ENCODE measurements at regions of chr17 and their contacts with region 1.

Region 1: GRCh38 chr17:28405632-28406472 is at the start of gene SLC46A1:
- DNase-seq: peak; percentile 96 to 97
- H3K4me3 ChIP-seq: peak within 1 kb of the TSS; percentile 78
- H3K4me3 Mint-ChIP-seq: peak within 1 kb of the TSS; percentile 90
- H3K27ac Mint-ChIP-seq: peak within 1 kb of the TSS; percentile 72
- H3K4me1 ChIP-seq: peaks cover 56% of the 10 kb centered on the region
- H3K4me1 Mint-ChIP-seq: peaks cover 31% of the 10 kb centered on the region
- H3K27me3 ChIP-seq: no peaks in the 10 kb centered on the region
- H3K27me3 Mint-ChIP-seq: no peaks in the 10 kb centered on the region
- CTCF ChIP-seq: no peak
- total RNA-seq, gene SLC46A1: 114 and 128 TPM in 2 replicates

Region 2: DNA sequence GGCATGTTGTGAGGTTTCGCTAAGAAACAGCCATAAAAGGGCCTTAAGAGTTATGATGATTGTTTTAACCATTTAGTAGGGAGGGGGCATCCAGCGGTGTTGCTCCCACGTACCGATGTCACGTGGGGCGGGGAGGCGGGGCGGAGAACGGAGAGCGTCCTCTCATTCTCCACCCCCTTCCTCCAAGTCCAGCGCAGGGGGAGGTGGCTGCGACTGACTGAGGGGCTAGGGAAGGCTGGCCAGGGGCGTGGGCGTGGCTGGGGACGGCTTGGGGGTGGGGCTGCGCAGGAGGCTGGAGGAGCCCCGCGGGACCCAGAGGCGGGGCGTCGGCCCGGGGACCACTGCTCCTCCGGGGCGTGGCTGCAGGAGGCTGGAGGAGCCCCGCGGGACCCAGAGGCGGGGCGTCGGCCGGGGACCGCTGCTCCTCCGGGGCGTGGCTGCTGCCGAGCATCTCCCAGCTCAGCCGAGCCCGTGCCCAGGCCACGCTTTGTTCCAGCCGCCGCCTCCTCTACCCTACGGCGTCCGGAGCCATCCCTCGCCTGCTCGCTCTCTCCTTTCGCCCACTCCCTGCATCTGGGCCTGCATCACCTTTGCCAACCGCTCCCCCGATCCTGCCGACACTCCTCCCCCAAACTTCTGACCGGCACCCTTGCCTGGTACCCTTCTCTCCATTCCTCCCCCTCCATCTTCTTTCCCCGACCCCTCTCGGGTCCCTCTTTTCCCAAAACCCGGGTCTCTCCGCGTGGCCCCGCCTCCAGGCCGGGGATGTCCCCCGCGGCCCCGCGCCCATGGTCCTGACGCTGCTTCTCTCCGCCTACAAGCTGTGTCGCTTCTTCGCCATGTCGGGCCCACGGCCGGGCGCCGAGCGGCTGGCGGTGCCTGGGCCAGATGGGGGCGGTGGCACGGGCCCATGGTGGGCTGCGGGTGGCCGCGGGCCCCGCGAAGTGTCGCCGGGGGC is 34.3 kb before region 1 on chr17 and contains the start of gene SARM1:
- CTCF ChIA-PET with region 1: interaction called, 13 read pairs
- POLR2A ChIA-PET with region 1: interaction called, 11 read pairs
- intact Hi-C with region 1: loop called (anchors 2 kb)
- DNase-seq: peak; percentile 99 to 100
- H3K4me3 ChIP-seq: peak within 1 kb of the TSS; percentile 40
- H3K4me3 Mint-ChIP-seq: peak within 1 kb of the TSS; percentile 75
- H3K27ac Mint-ChIP-seq: peak within 1 kb of the TSS; percentile 88
- H3K4me1 ChIP-seq: peaks cover 46% of the 10 kb centered on the region
- H3K4me1 Mint-ChIP-seq: peaks cover 54% of the 10 kb centered on the region
- H3K27me3 ChIP-seq: no peaks in the 10 kb centered on the region
- H3K27me3 Mint-ChIP-seq: no peaks in the 10 kb centered on the region
- CTCF ChIP-seq: no peak
- total RNA-seq, gene SARM1: 32.8 and 34.4 TPM in 2 replicates

Region 3: DNA sequence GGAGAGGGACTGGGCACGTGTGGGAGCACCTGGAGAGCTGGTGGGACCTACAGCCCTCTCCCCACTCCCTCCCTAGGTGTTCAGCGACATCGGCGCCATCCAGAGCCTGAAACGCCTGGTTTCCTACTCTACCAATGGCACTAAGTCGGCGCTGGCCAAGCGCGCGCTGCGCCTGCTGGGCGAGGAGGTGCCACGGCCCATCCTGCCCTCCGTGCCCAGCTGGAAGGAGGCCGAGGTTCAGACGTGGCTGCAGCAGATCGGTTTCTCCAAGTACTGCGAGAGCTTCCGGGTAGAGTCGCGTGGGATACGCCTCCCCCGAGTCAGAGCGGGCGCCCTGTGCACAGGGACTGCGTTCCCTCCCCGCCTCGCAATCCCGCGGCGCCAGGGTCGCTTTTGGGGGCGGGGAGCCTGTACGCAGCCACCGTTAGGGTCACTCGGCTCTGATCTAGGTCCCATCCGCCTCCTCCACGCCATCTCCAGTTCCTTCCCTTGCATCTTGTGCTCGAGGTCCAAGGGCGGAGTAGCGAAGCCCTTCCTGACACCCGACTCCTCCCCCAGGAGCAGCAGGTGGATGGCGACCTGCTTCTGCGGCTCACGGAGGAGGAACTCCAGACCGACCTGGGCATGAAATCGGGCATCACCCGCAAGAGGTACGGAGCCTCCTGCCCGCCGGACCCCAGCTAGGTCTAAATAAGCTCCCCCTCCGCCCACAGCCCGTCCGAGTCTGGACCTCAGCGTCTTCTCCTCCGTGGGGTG is 21.4 kb before region 1 on chr17:
- CTCF ChIA-PET with region 1: interaction called, 3 read pairs
- POLR2A ChIA-PET with region 1: interaction called, 10 read pairs
- intact Hi-C with region 1: loop called (anchors 1 kb)
- DNase-seq: peak; percentile 83 to 86
- H3K4me3 ChIP-seq: peak overlapping the region; percentile 52
- H3K4me3 Mint-ChIP-seq: peak overlapping the region; percentile 89
- H3K27ac Mint-ChIP-seq: peak overlapping the region; percentile 18
- H3K4me1 ChIP-seq: peaks cover 31% of the 10 kb centered on the region
- H3K4me1 Mint-ChIP-seq: peaks cover 17% of the 10 kb centered on the region
- H3K27me3 ChIP-seq: no peaks in the 10 kb centered on the region
- H3K27me3 Mint-ChIP-seq: no peaks in the 10 kb centered on the region
- CTCF ChIP-seq: no peak

Region 4: GRCh38 chr17:28467456-28468025 is 61.7 kb after region 1 on chr17:
- CTCF ChIA-PET with region 1: interaction called, 10 read pairs
- POLR2A ChIA-PET with region 1: no interaction called
- intact Hi-C with region 1: no loop called
- DNase-seq: peak in 1 of 2 experiments; percentile 9
- H3K4me3 ChIP-seq: no peak overlapping the region
- H3K4me3 Mint-ChIP-seq: no peak overlapping the region
- H3K27ac Mint-ChIP-seq: no peak overlapping the region
- H3K4me1 ChIP-seq: peaks cover 53% of the 10 kb centered on the region
- H3K4me1 Mint-ChIP-seq: peaks cover 50% of the 10 kb centered on the region
- H3K27me3 ChIP-seq: no peaks in the 10 kb centered on the region
- H3K27me3 Mint-ChIP-seq: no peaks in the 10 kb centered on the region
- CTCF ChIP-seq: no peak

Region 5: GRCh38 chr17:28500712-28501379 is 95.0 kb after region 1 on chr17:
- CTCF ChIA-PET with region 1: no interaction called
- POLR2A ChIA-PET with region 1: no interaction called
- intact Hi-C with region 1: no loop called
- DNase-seq: no peak
- H3K4me3 ChIP-seq: no peak overlapping the region
- H3K4me3 Mint-ChIP-seq: no peak overlapping the region
- H3K27ac Mint-ChIP-seq: no peak overlapping the region
- H3K4me1 ChIP-seq: peaks cover 6% of the 10 kb centered on the region; the same call in 1 of the 2 replicates
- H3K4me1 Mint-ChIP-seq: peaks cover 7% of the 10 kb centered on the region
- H3K27me3 ChIP-seq: no peaks in the 10 kb centered on the region
- H3K27me3 Mint-ChIP-seq: no peaks in the 10 kb centered on the region
- CTCF ChIP-seq: no peak